GM12878 (cell line): ENCODE measurements at regions of chr17 and their contacts with region 1.

Region 1: DNA sequence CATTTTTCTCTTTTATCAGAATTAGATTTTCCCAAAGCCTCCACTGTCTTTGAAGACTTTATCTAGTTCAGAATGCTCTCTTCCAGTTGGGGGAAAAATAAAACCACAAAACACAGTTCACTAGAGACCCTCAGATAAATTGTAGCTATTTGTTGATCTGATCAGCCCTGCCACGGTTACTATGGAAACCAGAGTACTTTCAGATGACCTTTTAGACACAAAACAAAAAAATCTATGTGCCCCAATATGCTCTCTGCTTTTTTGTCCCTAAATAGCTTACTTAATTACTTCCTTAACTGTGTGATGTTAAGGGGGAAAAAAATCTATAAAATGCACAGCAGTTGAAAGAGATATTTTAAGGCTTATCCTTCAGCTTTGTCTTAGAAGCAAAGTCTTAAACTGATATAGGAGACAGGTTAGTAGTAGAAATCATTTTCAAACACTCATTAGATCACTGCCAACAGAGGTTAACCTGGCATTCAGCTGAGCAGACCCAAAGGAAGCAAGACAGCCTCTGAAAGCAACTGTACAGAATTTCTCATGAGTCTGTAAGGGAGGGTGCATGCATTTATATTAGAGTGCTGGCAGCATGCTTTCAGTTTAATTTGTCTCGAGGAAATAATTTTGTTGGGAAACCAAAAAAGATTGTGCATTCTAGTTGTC is 129.9 kb upstream of the CACNG5 start:
- DNase-seq: no peak
- ATAC-seq: peak; percentile 43
- H3K4me3 ChIP-seq: no peak overlapping the region
- H3K27ac ChIP-seq: no peak overlapping the region
- H3K4me1 ChIP-seq: peaks cover 20% of the 10 kb centered on the region
- H3K27me3 ChIP-seq: no peaks in the 10 kb centered on the region
- CTCF ChIP-seq: no peak
- EP300 ChIP-seq: peak in 1 of 2 experiments; percentile 23; a peak in 1 of 4 replicates
- POLR2A ChIP-seq: no peak
- RAD21 ChIP-seq: no peak

Region 2: DNA sequence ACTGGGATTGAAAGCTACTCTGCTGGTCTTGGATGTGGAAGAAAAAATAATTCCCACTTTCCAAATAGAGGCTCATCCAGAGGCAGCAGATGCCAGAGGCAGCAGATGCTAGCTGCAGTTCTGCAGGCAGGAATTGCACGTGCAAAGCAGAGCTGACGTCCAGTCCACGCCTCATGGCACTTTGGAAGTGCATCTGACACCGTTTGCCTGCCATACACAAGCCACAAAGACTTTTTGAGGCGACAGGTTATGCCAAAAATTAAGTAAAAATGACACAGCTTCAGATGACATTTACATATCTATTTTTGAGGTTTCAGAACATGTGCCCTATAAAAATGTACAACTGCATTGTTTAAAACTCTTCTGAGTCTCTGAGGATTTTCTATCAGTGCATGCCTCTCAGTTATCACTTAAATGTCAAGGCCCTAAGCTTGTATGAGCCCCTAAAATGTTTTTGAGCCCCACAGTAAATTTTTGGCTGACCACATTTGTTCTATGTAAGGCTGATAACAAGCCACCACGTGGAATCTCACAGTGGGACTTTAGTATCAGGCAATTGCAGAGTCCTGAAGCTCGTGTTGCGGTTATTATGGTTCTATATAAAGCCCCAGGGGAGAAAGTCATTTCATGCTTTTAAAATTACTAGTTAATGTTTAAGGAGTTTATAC is 163.4 kb before region 1 on chr17:
- CTCF ChIA-PET with region 1: no interaction called
- POLR2A ChIA-PET with region 1: no interaction called
- RAD21 ChIA-PET with region 1: interaction called, 5 read pairs
- SMC1A ChIA-PET with region 1: interaction called, 16 read pairs
- in situ Hi-C with region 1: no loop called
- intact Hi-C with region 1: loop called (anchors 5 kb)
- DNase-seq: peak; percentile 40
- ATAC-seq: peak; percentile 83
- H3K4me3 ChIP-seq: 0 out of 2 replicates have a peak overlapping the region, but pooled peaks have one; percentile 14
- H3K27ac ChIP-seq: peak overlapping the region; percentile 58; the same call in 1 of the 2 replicates
- H3K4me1 ChIP-seq: peaks cover 9% of the 10 kb centered on the region
- H3K27me3 ChIP-seq: no peaks in the 10 kb centered on the region
- CTCF ChIP-seq: no peak
- EP300 ChIP-seq: peak; percentile 12 to 55; a peak in 2 of 4 replicates
- POLR2A ChIP-seq: no peak
- RAD21 ChIP-seq: no peak

Region 3: DNA sequence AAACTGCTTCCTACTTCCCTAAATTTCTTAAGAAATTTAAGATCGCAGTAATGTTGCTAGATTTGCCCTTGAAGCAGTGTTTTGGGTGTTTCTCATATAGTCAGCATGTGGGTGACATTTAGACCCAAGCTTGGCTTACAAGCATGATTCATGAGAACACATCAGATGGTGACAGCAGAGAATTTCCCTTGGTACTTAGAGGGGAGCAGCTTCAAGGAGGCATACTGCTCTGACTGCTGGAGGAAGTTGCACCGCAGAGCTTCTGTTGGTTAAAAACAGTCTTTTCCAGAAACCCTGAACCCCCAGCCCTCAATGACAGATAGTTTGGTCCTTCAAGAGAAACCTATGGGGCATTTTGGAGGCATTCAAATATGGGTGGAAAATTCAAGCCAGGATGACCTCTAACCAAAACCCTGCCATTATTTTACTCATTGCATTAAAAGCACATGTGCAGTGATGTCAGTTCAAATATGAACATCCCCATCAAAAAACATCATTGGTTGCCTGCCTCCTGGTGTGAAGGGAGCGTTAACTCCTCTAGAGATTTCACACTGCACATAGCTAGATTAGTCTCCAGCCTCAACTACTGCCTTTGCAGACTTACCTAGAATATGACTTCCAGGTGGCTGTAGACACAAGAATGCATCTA is 71.5 kb before region 1 on chr17:
- CTCF ChIA-PET with region 1: interaction called, 3 read pairs
- POLR2A ChIA-PET with region 1: no interaction called
- RAD21 ChIA-PET with region 1: interaction called, 13 read pairs
- SMC1A ChIA-PET with region 1: interaction called, 3 read pairs
- in situ Hi-C with region 1: no loop called
- intact Hi-C with region 1: loop called (anchors 5 kb)
- DNase-seq: no peak
- ATAC-seq: peak; percentile 79
- H3K4me3 ChIP-seq: no peak overlapping the region
- H3K27ac ChIP-seq: no peak overlapping the region
- H3K4me1 ChIP-seq: no peaks in the 10 kb centered on the region
- H3K27me3 ChIP-seq: no peaks in the 10 kb centered on the region
- CTCF ChIP-seq: no peak
- EP300 ChIP-seq: no peak
- POLR2A ChIP-seq: no peak
- RAD21 ChIP-seq: no peak

Region 4: GRCh38 chr17:66667491-66668030 is 37.4 kb before region 1 on chr17:
- CTCF ChIA-PET with region 1: interaction called, 5 read pairs
- POLR2A ChIA-PET with region 1: interaction called, 4 read pairs
- RAD21 ChIA-PET with region 1: interaction called, 13 read pairs
- SMC1A ChIA-PET with region 1: interaction called, 25 read pairs
- in situ Hi-C with region 1: no loop called
- intact Hi-C with region 1: no loop called
- DNase-seq: peak; percentile 56
- ATAC-seq: peak; percentile 95
- H3K4me3 ChIP-seq: no peak overlapping the region
- H3K27ac ChIP-seq: no peak overlapping the region
- H3K4me1 ChIP-seq: no peaks in the 10 kb centered on the region; the same call in 1 of the 2 replicates
- H3K27me3 ChIP-seq: 0 out of 4 replicates have a peak, but pooled peaks cover 0 to 2% of the 10 kb centered on the region in 2 experiments
- CTCF ChIP-seq: no peak
- EP300 ChIP-seq: peak; percentile 33 to 62; a peak in 2 of 4 replicates
- POLR2A ChIP-seq: no peak
- RAD21 ChIP-seq: no peak

Region 5: GRCh38 chr17:66673668-66674315 is 31.2 kb before region 1 on chr17:
- CTCF ChIA-PET with region 1: interaction called, 12 read pairs
- POLR2A ChIA-PET with region 1: interaction called, 4 read pairs
- RAD21 ChIA-PET with region 1: interaction called, 26 read pairs
- SMC1A ChIA-PET with region 1: interaction called, 25 read pairs
- in situ Hi-C with region 1: no loop called
- intact Hi-C with region 1: no loop called
- DNase-seq: no peak
- ATAC-seq: peak; percentile 72
- H3K4me3 ChIP-seq: no peak overlapping the region
- H3K27ac ChIP-seq: no peak overlapping the region
- H3K4me1 ChIP-seq: no peaks in the 10 kb centered on the region
- H3K27me3 ChIP-seq: no peaks in the 10 kb centered on the region
- CTCF ChIP-seq: peak; percentile 49 to 63 (median 55); a peak in 5 of 6 replicates
- EP300 ChIP-seq: no peak
- POLR2A ChIP-seq: no peak
- RAD21 ChIP-seq: peak; percentile 74

Region 6: DNA sequence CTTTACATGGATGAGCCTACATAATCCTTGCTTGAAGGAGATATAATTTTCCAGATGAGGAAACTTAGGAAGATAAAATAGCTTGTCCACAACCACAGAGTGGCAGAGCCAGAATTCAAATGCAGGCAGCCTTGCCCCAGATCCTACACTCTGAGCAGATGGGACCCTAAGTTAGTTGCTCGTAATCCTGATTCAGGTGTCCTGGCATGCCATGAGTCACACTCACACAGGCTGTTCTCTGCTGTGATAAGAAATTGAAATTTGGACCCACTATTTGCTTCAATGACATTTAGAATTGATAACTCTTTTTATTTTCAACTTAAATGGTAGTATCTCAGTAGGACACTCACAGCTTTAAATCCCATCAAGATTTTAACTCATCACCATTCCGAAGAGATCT is 20.7 kb before region 1 on chr17:
- CTCF ChIA-PET with region 1: no interaction called
- POLR2A ChIA-PET with region 1: interaction called, 5 read pairs
- RAD21 ChIA-PET with region 1: interaction called, 26 read pairs
- SMC1A ChIA-PET with region 1: interaction called, 15 read pairs
- in situ Hi-C with region 1: no loop called
- intact Hi-C with region 1: no loop called
- DNase-seq: no peak
- ATAC-seq: no peak
- H3K4me3 ChIP-seq: no peak overlapping the region
- H3K27ac ChIP-seq: no peak overlapping the region
- H3K4me1 ChIP-seq: no peaks in the 10 kb centered on the region
- H3K27me3 ChIP-seq: no peaks in the 10 kb centered on the region
- CTCF ChIP-seq: no peak
- EP300 ChIP-seq: no peak
- POLR2A ChIP-seq: no peak
- RAD21 ChIP-seq: no peak

Region 7: DNA sequence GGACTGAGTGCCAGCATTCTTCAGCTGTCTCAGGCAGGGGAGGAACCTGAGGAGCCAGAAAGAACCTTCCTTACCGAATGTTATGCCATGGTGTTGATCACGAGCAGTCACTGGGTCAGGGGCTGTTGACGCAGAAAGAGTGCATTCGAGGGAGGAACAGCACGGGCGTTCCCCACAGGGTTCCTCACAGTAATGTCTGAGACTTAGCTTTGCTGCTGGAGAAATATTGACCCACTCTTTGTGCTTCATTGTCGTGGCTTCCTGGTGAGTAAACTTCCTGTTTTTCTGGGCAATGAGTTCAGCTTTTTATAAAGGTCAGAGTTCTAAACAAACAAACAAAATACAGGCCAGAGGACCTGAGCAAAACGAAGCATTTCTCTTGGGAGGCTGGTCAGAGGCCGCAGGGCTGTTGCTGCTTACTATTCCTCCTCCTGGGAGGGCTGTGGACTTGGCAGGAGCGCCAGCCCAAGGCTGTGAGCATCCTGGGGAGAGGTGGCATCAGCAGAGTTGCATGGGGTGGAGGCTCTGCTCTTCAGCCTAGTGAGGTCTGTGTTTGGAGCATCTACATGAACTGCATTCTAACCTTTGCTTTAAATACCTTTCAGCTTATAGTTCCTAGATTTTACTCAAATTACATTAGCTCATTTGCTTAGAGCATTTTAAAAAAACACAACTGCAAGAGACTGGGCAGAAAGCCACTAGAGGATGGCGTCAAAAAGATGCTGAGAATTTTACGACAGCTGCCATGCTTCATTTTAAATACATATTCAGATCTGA is 13.2 kb before region 1 on chr17:
- CTCF ChIA-PET with region 1: interaction called, 9 read pairs
- POLR2A ChIA-PET with region 1: interaction called, 6 read pairs
- RAD21 ChIA-PET with region 1: interaction called, 17 read pairs
- SMC1A ChIA-PET with region 1: interaction called, 32 read pairs
- in situ Hi-C with region 1: no loop called
- intact Hi-C with region 1: no loop called
- DNase-seq: no peak
- ATAC-seq: peak; percentile 27; the same call in 2 of the 3 replicates
- H3K4me3 ChIP-seq: no peak overlapping the region
- H3K27ac ChIP-seq: no peak overlapping the region
- H3K4me1 ChIP-seq: peaks cover 4% of the 10 kb centered on the region; the same call in 1 of the 2 replicates
- H3K27me3 ChIP-seq: no peaks in the 10 kb centered on the region
- CTCF ChIP-seq: no peak
- EP300 ChIP-seq: no peak
- POLR2A ChIP-seq: no peak
- RAD21 ChIP-seq: no peak